ENCODE measurements at regions of chr12 and their contacts with region 1.

Region 1: DNA sequence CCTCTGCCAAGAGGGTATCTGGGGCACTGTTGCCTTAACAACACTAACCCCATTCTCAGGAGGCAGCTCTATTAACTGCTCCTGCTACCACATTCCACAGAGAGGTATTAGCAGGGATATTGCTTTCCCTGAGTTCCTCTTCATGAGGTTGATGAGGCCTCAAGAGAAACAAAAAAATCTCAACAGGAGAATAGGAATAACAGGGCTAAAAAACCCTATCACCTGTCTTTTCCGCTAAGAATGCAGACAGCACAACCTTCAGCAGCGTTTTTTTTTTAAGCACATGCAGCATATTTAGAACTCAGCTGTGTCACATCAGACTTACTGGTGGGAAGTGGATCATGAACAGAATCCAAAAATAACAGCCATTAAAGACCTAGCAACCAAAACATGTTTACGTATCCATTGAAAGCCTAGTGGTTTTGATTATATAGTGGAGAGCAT is 29.2 kb downstream of the ATF7 start:
- DNase-seq: peak; percentile 92
- H3K4me3 ChIP-seq: no peak overlapping the region
- H3K27ac ChIP-seq: peak overlapping the region; percentile 54
- H3K4me1 ChIP-seq: peaks cover 40% of the 10 kb centered on the region
- H3K27me3 ChIP-seq: no peaks in the 10 kb centered on the region
- CTCF ChIP-seq: no peak
- POLR2A ChIP-seq: no peak

Region 2: DNA sequence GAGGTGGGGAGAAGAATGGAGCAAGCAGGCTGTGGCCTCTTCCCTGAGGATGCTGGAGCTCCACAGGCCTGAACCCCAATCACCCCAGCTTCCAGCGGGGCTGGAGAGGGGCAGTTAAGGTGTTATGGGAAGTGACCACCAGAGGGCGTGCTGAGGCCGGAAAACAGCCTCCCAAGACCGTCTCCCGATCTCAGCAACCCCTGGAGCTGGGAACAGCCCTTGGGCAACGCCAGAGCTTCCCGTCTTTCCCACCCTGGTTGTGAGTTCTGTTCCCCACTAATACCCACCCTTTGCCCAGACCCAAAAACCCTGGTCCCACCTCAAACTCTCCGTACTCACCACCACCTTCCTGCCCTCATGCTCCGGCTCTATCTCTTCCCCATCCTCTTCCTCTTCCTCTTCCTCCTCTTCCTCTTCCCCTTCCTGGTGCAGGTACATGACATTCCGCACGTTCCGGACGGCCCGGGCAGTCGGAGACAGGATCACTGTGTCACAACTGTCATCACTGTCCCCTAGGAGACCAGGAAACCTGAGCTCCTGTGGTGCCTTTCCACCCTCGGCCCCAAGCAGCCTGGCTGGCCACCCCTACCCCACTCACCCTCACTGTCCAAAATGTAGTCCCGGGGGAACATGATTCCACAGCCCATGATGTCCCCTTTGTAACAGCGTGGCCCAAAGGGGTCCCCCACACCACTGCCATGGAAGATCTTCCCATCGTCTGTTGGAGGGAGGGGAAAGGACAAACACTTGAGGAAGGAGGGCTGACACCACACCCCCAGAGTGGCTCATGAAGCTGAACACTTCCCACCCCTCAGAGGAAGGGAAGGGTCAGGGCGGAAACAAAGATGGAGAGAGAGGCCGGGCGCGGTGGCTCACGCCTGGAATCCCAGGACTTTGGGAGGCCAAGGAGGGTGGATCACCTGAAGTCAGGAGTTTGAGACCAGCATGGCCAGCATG is 530.7 kb before region 1 on chr12:
- CTCF ChIA-PET with region 1: no interaction called
- POLR2A ChIA-PET with region 1: no interaction called
- dilution Hi-C with region 1: no loop called
- intact Hi-C with region 1: no loop called
- DNase-seq: peak; percentile 65
- H3K4me3 ChIP-seq: no peak overlapping the region
- H3K27ac ChIP-seq: peak overlapping the region; percentile 44
- H3K4me1 ChIP-seq: peaks cover 22% of the 10 kb centered on the region
- H3K27me3 ChIP-seq: no peaks in the 10 kb centered on the region
- CTCF ChIP-seq: peak; percentile 85 to 90
- POLR2A ChIP-seq: peak; percentile 39

Region 3: GRCh38 chr12:53561590-53561953 is 35.4 kb before region 1 on chr12:
- CTCF ChIA-PET with region 1: interaction called, 11 read pairs
- POLR2A ChIA-PET with region 1: no interaction called
- dilution Hi-C with region 1: no loop called
- intact Hi-C with region 1: loop called (anchors 2 kb)
- DNase-seq: peak; percentile 93
- H3K4me3 ChIP-seq: peak overlapping the region in 1 of 3 experiments; percentile 19
- H3K27ac ChIP-seq: peak overlapping the region; percentile 96
- H3K4me1 ChIP-seq: peaks cover 28% of the 10 kb centered on the region
- H3K27me3 ChIP-seq: no peaks in the 10 kb centered on the region
- CTCF ChIP-seq: no peak
- POLR2A ChIP-seq: no peak

Region 4: GRCh38 chr12:53618275-53618674 is 21.3 kb after region 1 on chr12:
- CTCF ChIA-PET with region 1: interaction called, 5 read pairs
- POLR2A ChIA-PET with region 1: no interaction called
- dilution Hi-C with region 1: no loop called
- intact Hi-C with region 1: loop called (anchors 1 kb)
- DNase-seq: no peak
- H3K4me3 ChIP-seq: peak overlapping the region in 2 of 3 experiments; percentile 49 to 67
- H3K27ac ChIP-seq: peak overlapping the region; percentile 76
- H3K4me1 ChIP-seq: peaks cover 36% of the 10 kb centered on the region
- H3K27me3 ChIP-seq: no peaks in the 10 kb centered on the region
- CTCF ChIP-seq: no peak
- POLR2A ChIP-seq: no peak

Region 5: GRCh38 chr12:53625946-53626701 is 29.2 kb after region 1 on chr12 and contains the start of gene ATF7:
- CTCF ChIA-PET with region 1: interaction called, 5 read pairs
- POLR2A ChIA-PET with region 1: no interaction called
- dilution Hi-C with region 1: no loop called
- intact Hi-C with region 1: loop called (anchors 2 kb)
- DNase-seq: peak; percentile 99
- H3K4me3 ChIP-seq: peak within 1 kb of the TSS; percentile 61 to 97 (median 87)
- H3K27ac ChIP-seq: peak within 1 kb of the TSS; percentile 86
- H3K4me1 ChIP-seq: peaks cover 29% of the 10 kb centered on the region
- H3K27me3 ChIP-seq: no peaks in the 10 kb centered on the region
- CTCF ChIP-seq: no peak
- POLR2A ChIP-seq: no peak
- total RNA-seq, gene ATF7: 56.9 and 68.5 TPM in 2 replicates